Posterior cingulate gyrus (tissue), 11 donors: ENCODE measurements at regions of chr1 and their contacts with region 1.

Region 1: GRCh38 chr1:180154325-180155181 is at the start of gene QSOX1:
- DNase-seq: peak; percentile 79 to 98 (median 90)

Region 2: GRCh38 chr1:179954493-179955297 is 199.9 kb before region 1 on chr1 and contains the start of gene CEP350:
- intact Hi-C with region 1: loop called (anchors 2 kb)
- DNase-seq: peak; percentile 93 to 99 (median 95)

Region 3: GRCh38 chr1:179984942-179985341 is 169.6 kb before region 1 on chr1:
- intact Hi-C with region 1: no loop called
- DNase-seq: no peak